Mammary epithelial cell (primary cell): ENCODE measurements at regions of chr15 and their contacts with region 1.

Region 1: GRCh38 chr15:70149667-70150404 is 52.1 kb upstream of the TLE3 start:
- DNase-seq: peak; percentile 33
- H3K4me3 ChIP-seq: no peak overlapping the region
- H3K27ac ChIP-seq: no peak overlapping the region
- H3K4me1 ChIP-seq: peaks cover 3% of the 10 kb centered on the region
- H3K27me3 ChIP-seq: no peaks in the 10 kb centered on the region
- CTCF ChIP-seq: no peak

Region 2: GRCh38 chr15:70048578-70049514 is 101.0 kb before region 1 on chr15:
- CTCF ChIA-PET with region 1: no interaction called
- dilution Hi-C with region 1: loop called (anchors 5 kb)
- in situ Hi-C with region 1: no loop called
- intact Hi-C with region 1: no loop called
- DNase-seq: no peak
- H3K4me3 ChIP-seq: no peak overlapping the region
- H3K27ac ChIP-seq: no peak overlapping the region
- H3K4me1 ChIP-seq: no peaks in the 10 kb centered on the region
- H3K27me3 ChIP-seq: no peaks in the 10 kb centered on the region
- CTCF ChIP-seq: no peak